Mucosa of descending colon (tissue), 3 donors: ENCODE measurements at regions of chr10 and their contacts with region 1.

Region 1: DNA sequence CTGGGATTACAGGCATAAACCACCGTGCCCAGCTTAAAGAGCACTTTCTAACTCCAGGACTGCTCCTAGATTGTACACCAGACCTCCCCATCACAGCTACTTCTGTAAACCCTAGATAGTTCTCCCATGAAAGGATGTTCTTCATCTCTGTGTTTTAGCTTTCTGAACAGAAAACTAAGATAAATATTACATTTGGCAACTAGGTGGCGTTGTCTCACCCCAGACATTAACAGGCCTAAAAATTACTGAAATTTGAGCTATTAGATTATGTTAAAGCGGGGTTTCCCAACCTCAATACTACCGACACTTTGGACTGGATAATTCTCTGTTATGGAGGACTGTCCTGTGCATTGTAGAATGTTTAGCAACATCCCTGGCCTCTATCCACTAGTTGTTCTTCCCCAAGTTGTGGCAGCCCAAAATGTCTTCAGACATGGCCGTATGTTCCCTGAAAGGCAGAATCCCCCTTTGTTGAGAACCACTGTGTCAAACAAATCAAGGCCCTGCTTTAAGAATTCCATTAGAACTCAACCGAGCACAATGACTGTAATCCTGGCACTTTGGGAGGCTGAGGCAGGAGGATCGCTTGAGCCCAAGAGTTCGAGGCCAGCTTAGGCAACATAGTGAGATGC is 19.1 kb downstream of the ATOH7 start:
- DNase-seq: peak in 1 of 3 donors; percentile 10
- ATAC-seq: peak; percentile 42
- H3K4me3 ChIP-seq: no peak overlapping the region
- H3K4me1 ChIP-seq: no peaks in the 10 kb centered on the region
- CTCF ChIP-seq: peak; percentile 15

Region 2: DNA sequence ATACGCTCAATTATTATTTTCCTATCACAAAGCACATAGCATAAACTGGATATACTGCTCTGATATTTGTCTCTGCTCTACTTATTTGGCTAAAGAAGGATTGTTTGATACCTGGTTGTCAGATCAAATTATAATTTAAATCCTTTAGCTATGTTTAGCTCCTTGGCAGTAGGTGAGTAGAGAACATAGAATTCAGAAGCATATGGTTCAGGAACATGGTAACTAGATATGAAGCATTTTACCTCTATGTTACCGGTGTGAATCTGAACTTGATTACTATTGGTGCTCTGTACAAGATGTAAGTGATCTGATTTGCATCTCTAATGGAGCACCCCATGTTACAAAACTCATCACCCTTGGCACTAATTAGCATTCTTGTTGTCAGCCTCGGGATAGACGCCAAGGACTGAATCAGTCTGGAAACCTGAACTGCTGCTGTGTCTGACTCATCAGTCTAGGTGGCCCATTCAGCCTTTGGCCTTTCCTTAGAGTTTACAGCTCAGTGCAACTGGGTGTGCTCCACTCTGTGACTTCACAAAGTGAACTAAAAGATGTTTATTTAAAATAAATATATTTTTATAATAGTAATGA is 115.8 kb before region 1 on chr10:
- intact Hi-C with region 1: no loop called
- DNase-seq: peak in 2 of 3 donors; percentile 33 to 72
- ATAC-seq: peak; percentile 100
- H3K4me3 ChIP-seq: no peak overlapping the region
- H3K4me1 ChIP-seq: no peaks in the 10 kb centered on the region
- CTCF ChIP-seq: no peak

Region 3: GRCh38 chr10:68301790-68302502 is 89.1 kb after region 1 on chr10:
- intact Hi-C with region 1: loop called in 1 of 2 experiments (anchors 10 kb)
- DNase-seq: no peak
- ATAC-seq: peak; percentile 78
- H3K4me3 ChIP-seq: no peak overlapping the region
- H3K4me1 ChIP-seq: peaks cover 19% of the 10 kb centered on the region
- CTCF ChIP-seq: no peak